Motor neuron (in vitro differentiated cells): ENCODE measurements at regions of chr5 and their contacts with region 1.

Region 1: DNA sequence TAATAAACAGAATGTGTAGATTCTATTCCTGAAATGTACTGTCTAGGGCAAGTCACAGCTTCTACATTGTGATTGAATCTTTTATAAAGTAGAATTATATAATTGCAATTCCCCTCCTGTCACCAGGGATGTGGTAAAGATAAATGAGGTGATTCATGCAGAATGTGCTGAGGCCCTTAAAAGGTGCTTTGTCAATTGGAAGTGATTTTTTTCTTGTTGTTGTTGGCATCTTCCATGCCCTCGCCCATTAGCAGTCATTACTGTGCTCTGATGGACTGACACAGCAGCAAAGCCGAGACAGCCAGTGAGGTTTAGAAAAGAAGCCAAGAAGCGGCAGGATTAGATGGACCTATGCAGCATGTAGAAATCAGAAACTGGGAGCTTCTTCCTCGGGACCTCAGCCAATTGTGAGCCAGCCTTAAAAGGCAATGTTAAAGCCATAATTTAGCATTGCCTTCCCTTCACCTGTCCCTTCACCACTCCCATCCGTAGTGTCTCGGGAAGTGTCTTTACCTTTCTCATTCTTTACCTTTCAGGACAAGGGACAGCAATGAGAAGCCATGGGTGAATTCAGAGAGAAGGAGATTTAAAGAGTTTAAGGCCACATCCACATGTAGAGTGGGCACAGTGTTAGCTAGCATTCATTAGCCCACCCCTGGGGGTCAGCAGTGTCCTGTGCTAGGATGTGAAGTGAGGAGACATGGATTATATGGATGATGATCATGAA is 257.8 kb downstream of the PLK2 start:
- ATAC-seq: peak in 5 of 8 experiments; percentile 78 to 93 (median 89)
- H3K4me3 ChIP-seq: no peak overlapping the region
- H3K27ac ChIP-seq: no peak overlapping the region
- H3K4me1 ChIP-seq: peaks cover 3 to 6% of the 10 kb centered on the region in 2 donors

Region 2: DNA sequence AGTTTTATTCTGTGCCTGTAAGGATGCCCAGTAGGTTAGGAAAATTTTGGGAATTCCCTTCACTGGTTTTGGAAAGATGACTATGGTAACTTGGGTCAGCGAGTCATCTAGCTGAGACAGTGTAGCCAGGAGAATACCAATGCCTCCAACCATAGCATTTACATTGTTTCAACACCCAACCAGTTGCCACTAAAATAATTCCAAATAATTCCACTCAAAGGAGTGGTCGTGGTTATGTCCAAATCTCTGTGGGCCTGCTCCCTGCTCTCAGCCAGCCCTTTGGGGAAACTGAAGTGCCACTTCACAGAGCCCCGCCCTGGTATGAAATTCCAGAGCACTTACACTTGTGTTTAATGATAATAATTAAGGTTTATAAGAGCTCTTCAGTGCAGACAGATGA is 52.7 kb before region 1 on chr5:
- in situ Hi-C with region 1: loop called in 1 of 9 experiments (anchors 10 kb)
- ATAC-seq: peak in 1 of 8 experiments; percentile 30
- H3K4me3 ChIP-seq: no peak overlapping the region
- H3K27ac ChIP-seq: no peak overlapping the region
- H3K4me1 ChIP-seq: no peaks in the 10 kb centered on the region

Region 3: DNA sequence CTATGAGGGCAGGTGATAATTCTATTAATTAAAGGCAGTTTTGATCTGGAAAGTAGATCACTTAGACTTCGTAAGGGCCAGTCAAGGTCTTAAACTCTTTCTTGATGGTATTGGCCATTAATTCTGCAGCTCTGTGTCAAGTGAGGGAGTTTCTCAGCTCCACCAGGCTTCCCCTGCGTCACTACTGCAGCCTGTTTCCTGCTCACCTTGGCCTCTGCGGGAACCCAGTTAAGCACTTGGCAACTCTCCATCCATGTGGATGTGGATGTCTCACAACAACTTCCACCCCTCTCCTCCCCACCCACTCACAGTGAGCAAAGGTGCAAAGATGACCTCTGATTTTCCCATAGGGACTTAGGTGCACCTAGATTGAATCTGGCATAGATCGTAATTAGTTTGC is 66.2 kb after region 1 on chr5:
- in situ Hi-C with region 1: no loop called
- ATAC-seq: no peak
- H3K4me3 ChIP-seq: no peak overlapping the region
- H3K27ac ChIP-seq: no peak overlapping the region
- H3K4me1 ChIP-seq: no peaks in the 10 kb centered on the region